ENCODE measurements at regions of chr2 and their contacts with region 1.

Region 1: DNA sequence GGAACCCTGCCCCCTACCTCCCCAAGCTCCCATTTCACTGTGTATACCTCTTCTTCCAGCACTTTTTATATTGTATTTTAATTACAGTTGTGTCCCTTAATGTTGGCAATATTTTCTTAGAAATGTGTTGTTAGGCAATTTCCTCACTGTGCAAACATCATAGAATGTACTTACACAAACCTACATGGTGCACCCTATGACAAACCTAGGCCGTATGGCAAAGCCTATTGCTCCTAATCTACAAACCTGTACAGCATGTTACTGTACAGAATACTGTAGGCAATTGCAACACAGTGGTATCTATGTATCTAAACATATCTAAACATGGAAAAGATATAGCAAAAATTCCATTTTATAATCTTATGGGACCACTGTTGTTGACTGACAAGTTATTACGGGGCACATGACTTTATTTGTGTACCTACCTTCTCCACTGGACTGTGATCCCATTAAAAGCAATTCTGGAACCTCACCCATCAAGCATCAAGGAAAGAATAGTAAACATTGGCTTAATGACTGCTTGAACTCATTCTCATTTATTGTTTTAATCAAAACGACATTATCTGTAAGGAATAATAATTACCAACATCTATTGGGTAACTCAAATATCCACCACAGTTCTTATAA is 1641.5 kb upstream of the ZEB2 start:
- DNase-seq: no peak
- ATAC-seq: no peak
- H3K4me3 ChIP-seq: no peak overlapping the region
- H3K27ac ChIP-seq: no peak overlapping the region
- H3K4me1 ChIP-seq: peaks cover 5% of the 10 kb centered on the region
- H3K27me3 ChIP-seq: no peaks in the 10 kb centered on the region
- CTCF ChIP-seq: no peak
- POLR2A ChIP-seq: no peak

Region 2: GRCh38 chr2:145752091-145752806 is 409.1 kb before region 1 on chr2:
- intact Hi-C with region 1: no loop called
- DNase-seq: peak; percentile 24 to 47 (median 25)
- ATAC-seq: peak; percentile 80
- H3K4me3 ChIP-seq: no peak overlapping the region
- H3K27ac ChIP-seq: peak overlapping the region in 3 of 4 donors; percentile 11 to 49 (median 41)
- H3K4me1 ChIP-seq: peaks cover 44% of the 10 kb centered on the region
- H3K27me3 ChIP-seq: no peaks in the 10 kb centered on the region
- CTCF ChIP-seq: peak; percentile 42 to 77 (median 70)
- POLR2A ChIP-seq: no peak

Region 3: DNA sequence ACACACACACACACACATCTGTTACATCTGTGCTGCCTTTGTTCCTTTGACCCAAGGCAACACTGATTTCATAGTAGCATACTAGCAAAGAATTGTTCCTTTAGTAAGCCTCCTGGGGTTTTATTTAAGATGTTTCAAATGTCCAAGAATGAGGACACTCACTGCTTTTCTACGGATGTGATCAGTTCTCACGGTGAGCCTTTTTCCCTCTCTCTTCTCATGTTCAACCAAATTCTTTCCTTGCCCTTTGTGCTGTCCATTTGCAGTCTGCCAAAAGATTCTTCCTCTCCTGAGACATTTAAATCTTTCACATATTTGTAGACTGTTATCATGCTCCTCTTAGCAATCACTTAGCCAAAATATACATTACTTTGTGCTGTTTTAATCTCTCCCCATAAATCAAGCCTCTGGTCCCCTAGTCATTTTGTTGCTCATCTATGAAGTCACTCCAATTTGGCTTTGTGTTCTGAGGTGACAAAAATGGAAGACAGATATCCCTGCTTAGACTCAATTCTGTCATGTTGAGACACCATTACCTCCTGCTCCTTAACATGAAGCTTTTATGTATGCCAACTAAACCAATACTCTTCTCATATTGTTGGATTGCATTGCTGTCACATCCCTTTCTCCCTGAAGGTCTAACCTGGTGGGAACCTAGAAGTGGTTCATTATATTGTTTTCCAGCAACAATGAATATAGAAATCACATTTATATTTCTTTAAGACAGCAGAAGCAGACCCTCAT is 78.2 kb after region 1 on chr2:
- intact Hi-C with region 1: no loop called
- DNase-seq: no peak
- ATAC-seq: no peak
- H3K4me3 ChIP-seq: no peak overlapping the region
- H3K27ac ChIP-seq: no peak overlapping the region
- H3K4me1 ChIP-seq: no peaks in the 10 kb centered on the region
- H3K27me3 ChIP-seq: no peaks in the 10 kb centered on the region
- CTCF ChIP-seq: no peak
- POLR2A ChIP-seq: no peak

Region 4: GRCh38 chr2:148067801-148068200 is 1906.4 kb after region 1 on chr2:
- intact Hi-C with region 1: loop called (anchors 10 kb)
- DNase-seq: peak in 3 of 4 donors; percentile 7 to 21 (median 13)
- ATAC-seq: no peak
- H3K4me3 ChIP-seq: no peak overlapping the region
- H3K27ac ChIP-seq: no peak overlapping the region
- H3K4me1 ChIP-seq: peaks cover 17% of the 10 kb centered on the region
- H3K27me3 ChIP-seq: no peaks in the 10 kb centered on the region
- CTCF ChIP-seq: no peak
- POLR2A ChIP-seq: no peak